ENCODE measurements at regions of chr17 and their contacts with region 1.

Region 1: GRCh38 chr17:7484067-7484918 is at the start of gene POLR2A:
- DNase-seq: peak; percentile 96 to 100 (median 98)
- ATAC-seq: peak; percentile 66
- H3K4me3 ChIP-seq: peak within 1 kb of the TSS; percentile 87
- H3K4me3 Mint-ChIP-seq: peak within 1 kb of the TSS; percentile 94
- H3K27ac ChIP-seq: peak within 1 kb of the TSS; percentile 99
- H3K27ac Mint-ChIP-seq: peak within 1 kb of the TSS; percentile 99
- H3K4me1 ChIP-seq: peaks cover 73% of the 10 kb centered on the region
- H3K4me1 Mint-ChIP-seq: peaks cover 72% of the 10 kb centered on the region
- H3K27me3 ChIP-seq: no peaks in the 10 kb centered on the region
- H3K27me3 Mint-ChIP-seq: no peaks in the 10 kb centered on the region
- CTCF ChIP-seq: no peak
- total RNA-seq, gene POLR2A: 491 to 501 TPM

Region 2: GRCh38 chr17:7306911-7307686 is 177.2 kb before region 1 on chr17 and contains the start of gene EIF5A:
- CTCF ChIA-PET with region 1: no interaction called
- POLR2A ChIA-PET with region 1: interaction called, 13 read pairs
- intact Hi-C with region 1: loop called in 1 of 2 experiments (anchors 5 kb)
- DNase-seq: peak; percentile 100
- ATAC-seq: peak; percentile 68
- H3K4me3 ChIP-seq: peak within 1 kb of the TSS; percentile 76
- H3K4me3 Mint-ChIP-seq: peak within 1 kb of the TSS; percentile 92
- H3K27ac ChIP-seq: peak within 1 kb of the TSS; percentile 97 to 99
- H3K27ac Mint-ChIP-seq: peak within 1 kb of the TSS; percentile 98
- H3K4me1 ChIP-seq: peaks cover 39% of the 10 kb centered on the region
- H3K4me1 Mint-ChIP-seq: peaks cover 44% of the 10 kb centered on the region
- H3K27me3 ChIP-seq: no peaks in the 10 kb centered on the region
- H3K27me3 Mint-ChIP-seq: no peaks in the 10 kb centered on the region
- CTCF ChIP-seq: no peak
- total RNA-seq, gene EIF5A: 471 to 480 TPM

Region 3: GRCh38 chr17:7383742-7384488 is 100.4 kb before region 1 on chr17:
- CTCF ChIA-PET with region 1: no interaction called
- POLR2A ChIA-PET with region 1: interaction called, 24 read pairs
- intact Hi-C with region 1: no loop called
- DNase-seq: peak; percentile 63 to 93 (median 77)
- ATAC-seq: peak; percentile 94
- H3K4me3 ChIP-seq: peak overlapping the region; percentile 64
- H3K4me3 Mint-ChIP-seq: peak overlapping the region; percentile 87
- H3K27ac ChIP-seq: peak overlapping the region; percentile 74 to 77
- H3K27ac Mint-ChIP-seq: peak overlapping the region; percentile 91
- H3K4me1 ChIP-seq: peaks cover 28% of the 10 kb centered on the region
- H3K4me1 Mint-ChIP-seq: peaks cover 10% of the 10 kb centered on the region
- H3K27me3 ChIP-seq: peaks cover 21 to 22% of the 10 kb centered on the region in 2 experiments
- H3K27me3 Mint-ChIP-seq: peaks cover 41% of the 10 kb centered on the region
- CTCF ChIP-seq: no peak

Region 4: DNA sequence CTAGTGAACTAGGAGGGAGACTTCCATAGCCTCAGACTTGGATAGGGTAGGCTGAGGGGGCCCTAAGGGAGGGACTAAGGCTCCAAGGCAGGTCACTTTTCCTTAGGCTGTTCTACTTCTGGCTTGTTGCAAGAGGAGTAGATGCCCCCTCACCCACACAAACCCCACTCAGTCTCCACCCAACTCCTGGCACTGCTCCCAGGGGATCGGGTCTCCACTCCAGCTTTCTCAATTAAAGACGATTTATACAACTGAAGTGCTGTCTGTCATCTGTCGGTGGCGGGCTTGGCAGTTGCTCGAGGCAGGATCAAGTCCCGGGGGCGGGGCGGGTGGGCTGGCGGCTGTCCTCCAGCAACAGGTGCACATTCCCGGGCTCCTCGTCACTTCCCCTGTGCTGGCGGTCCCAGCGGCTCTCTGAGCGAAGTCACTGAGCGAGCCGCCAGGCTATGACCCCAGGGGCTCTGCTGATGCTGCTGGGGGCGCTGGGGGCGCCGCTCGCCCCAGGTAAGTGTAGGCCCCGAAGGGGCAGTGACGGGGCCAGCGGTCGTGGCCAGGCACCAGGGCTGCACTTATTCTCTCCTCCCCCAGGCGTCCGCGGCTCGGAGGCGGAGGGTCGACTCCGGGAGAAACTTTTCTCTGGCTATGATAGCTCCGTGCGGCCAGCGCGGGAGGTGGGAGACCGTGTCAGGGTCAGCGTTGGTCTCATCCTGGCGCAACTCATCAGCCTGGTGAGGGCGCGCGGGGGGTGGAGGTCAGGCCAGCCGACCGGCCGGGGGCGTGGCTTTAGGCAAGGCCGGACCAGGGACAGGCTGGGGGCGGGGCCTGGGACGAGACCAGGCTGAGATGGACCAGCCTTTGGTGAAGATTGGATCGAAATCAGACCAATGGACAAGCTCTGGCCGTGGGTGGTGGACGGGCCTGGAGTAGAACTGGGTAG is 39.3 kb before region 1 on chr17 and contains the start of gene CHRNB1:
- CTCF ChIA-PET with region 1: interaction called, 3 read pairs
- POLR2A ChIA-PET with region 1: interaction called, 156 read pairs
- intact Hi-C with region 1: no loop called
- DNase-seq: peak in 3 of 14 experiments; percentile 15 to 56 (median 43)
- ATAC-seq: peak; percentile 11
- H3K4me3 ChIP-seq: peak within 1 kb of the TSS; percentile 37
- H3K4me3 Mint-ChIP-seq: peak within 1 kb of the TSS; percentile 59
- H3K27ac ChIP-seq: no peak within 1 kb of the TSS
- H3K27ac Mint-ChIP-seq: no peak within 1 kb of the TSS
- H3K4me1 ChIP-seq: peaks cover 37% of the 10 kb centered on the region
- H3K4me1 Mint-ChIP-seq: peaks cover 29% of the 10 kb centered on the region
- H3K27me3 ChIP-seq: peaks cover 67 to 73% of the 10 kb centered on the region in 2 experiments
- H3K27me3 Mint-ChIP-seq: peaks cover 72% of the 10 kb centered on the region
- CTCF ChIP-seq: no peak
- total RNA-seq, gene CHRNB1: 1.6 to 2.2 TPM

Region 5: GRCh38 chr17:7561028-7561575 is 76.8 kb after region 1 on chr17:
- CTCF ChIA-PET with region 1: interaction called, 6 read pairs
- POLR2A ChIA-PET with region 1: interaction called, 9 read pairs
- intact Hi-C with region 1: loop called in 1 of 2 experiments (anchors 2 kb)
- DNase-seq: peak; percentile 62 to 89 (median 77)
- ATAC-seq: peak; percentile 62
- H3K4me3 ChIP-seq: peak overlapping the region; percentile 91
- H3K4me3 Mint-ChIP-seq: peak overlapping the region; percentile 95
- H3K27ac ChIP-seq: peak overlapping the region; percentile 88 to 96
- H3K27ac Mint-ChIP-seq: peak overlapping the region; percentile 93
- H3K4me1 ChIP-seq: peaks cover 66% of the 10 kb centered on the region
- H3K4me1 Mint-ChIP-seq: peaks cover 40% of the 10 kb centered on the region
- H3K27me3 ChIP-seq: no peaks in the 10 kb centered on the region
- H3K27me3 Mint-ChIP-seq: no peaks in the 10 kb centered on the region
- CTCF ChIP-seq: peak; percentile 89

Region 6: GRCh38 chr17:7844292-7845154 is 360.2 kb after region 1 on chr17:
- CTCF ChIA-PET with region 1: no interaction called
- POLR2A ChIA-PET with region 1: no interaction called
- intact Hi-C with region 1: loop called in 1 of 2 experiments (anchors 5 kb)
- DNase-seq: peak; percentile 56 to 94 (median 73)
- ATAC-seq: peak; percentile 14
- H3K4me3 ChIP-seq: peak overlapping the region; percentile 84
- H3K4me3 Mint-ChIP-seq: peak overlapping the region; percentile 92
- H3K27ac ChIP-seq: peak overlapping the region; percentile 100
- H3K27ac Mint-ChIP-seq: peak overlapping the region; percentile 90
- H3K4me1 ChIP-seq: peaks cover 59% of the 10 kb centered on the region
- H3K4me1 Mint-ChIP-seq: peaks cover 35% of the 10 kb centered on the region
- H3K27me3 ChIP-seq: no peaks in the 10 kb centered on the region
- H3K27me3 Mint-ChIP-seq: peaks cover 10% of the 10 kb centered on the region
- CTCF ChIP-seq: no peak

Measured in CD4-positive, alpha-beta T cell (primary cell).